ENCODE measurements at regions of chr20 and their contacts with region 1.

Region 1: GRCh38 chr20:38472513-38473372 is at the start of gene RALGAPB:
- DNase-seq: peak; percentile 99 to 100
- ATAC-seq: peak; percentile 96 to 100 (median 98)
- H3K4me3 ChIP-seq: peak within 1 kb of the TSS; percentile 73 to 92 (median 86)
- H3K27ac ChIP-seq: peak within 1 kb of the TSS; percentile 63 to 96 (median 92)
- H3K4me1 ChIP-seq: peaks cover 3 to 40% (median 24%) of the 10 kb centered on the region in 9 donors
- H3K27me3 ChIP-seq: no peaks in the 10 kb centered on the region
- CTCF ChIP-seq: peak in 6 of 9 donors; percentile 8 to 65 (median 52)
- total RNA-seq, gene RALGAPB: 21.6 to 28.2 (median 26.5) TPM

Region 2: GRCh38 chr20:38446441-38447209 is 26.1 kb before region 1 on chr20:
- intact Hi-C with region 1: loop called in 2 of 10 experiments (anchors 1 to 2 kb)
- DNase-seq: peak; percentile 93 to 94
- ATAC-seq: peak; percentile 92 to 96 (median 95)
- H3K4me3 ChIP-seq: peak overlapping the region; percentile 63 to 97 (median 79)
- H3K27ac ChIP-seq: peak overlapping the region; percentile 36 to 95 (median 86)
- H3K4me1 ChIP-seq: peaks cover 3 to 34% (median 14%) of the 10 kb centered on the region in 9 donors
- H3K27me3 ChIP-seq: no peaks in the 10 kb centered on the region
- CTCF ChIP-seq: peak; percentile 89 to 98 (median 95)

Measured in heart right ventricle (tissue), 16 donors.